PC-9 (cell line): ENCODE measurements at regions of chr7 and their contacts with region 1.

Region 1: DNA sequence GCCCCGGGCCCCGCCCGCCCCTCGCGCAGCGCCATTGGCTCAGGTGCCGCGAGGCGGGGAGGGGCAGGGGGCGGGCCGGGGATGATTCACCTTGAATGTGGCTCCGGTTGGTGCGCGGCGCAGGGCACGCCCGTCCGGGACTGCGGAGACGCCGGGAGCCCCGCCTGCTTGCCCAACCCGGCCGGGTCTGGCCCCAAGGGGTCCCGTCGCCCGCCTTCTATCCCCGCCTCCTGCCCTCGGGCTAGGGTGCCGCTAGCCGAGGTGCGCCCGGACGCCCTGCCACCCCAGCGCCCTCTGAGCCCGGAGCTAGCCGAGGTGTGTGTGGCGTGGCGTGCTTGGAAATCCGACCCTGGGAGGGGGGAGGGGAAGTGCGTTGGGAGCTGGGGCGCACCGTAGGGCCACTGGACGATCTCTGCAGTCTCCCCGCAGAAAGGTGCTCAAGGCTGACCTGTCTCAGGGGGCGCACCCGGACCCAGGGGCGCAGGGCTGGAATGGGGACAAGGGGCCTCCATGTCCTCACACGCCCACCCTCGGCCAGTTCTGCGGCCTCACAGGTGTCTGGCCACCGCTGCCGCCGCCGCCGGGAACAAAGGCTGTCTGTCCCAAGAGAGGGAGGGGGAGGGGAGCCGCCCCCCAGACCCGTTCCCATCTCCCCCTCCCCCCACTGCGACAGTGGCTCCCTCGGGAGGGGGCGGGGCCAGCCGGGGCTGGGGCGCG is 168.9 kb downstream of the NRF1 start:
- DNase-seq: peak; percentile 84 to 98
- H3K4me3 ChIP-seq: peak overlapping the region; percentile 85
- H3K27ac ChIP-seq: peak overlapping the region; percentile 21
- H3K4me1 ChIP-seq: peaks cover 17% of the 10 kb centered on the region
- H3K27me3 ChIP-seq: no peaks in the 10 kb centered on the region
- CTCF ChIP-seq: no peak

Region 2: GRCh38 chr7:129224251-129225205 is 555.9 kb before region 1 on chr7 and contains the start of gene AHCYL2:
- CTCF ChIA-PET with region 1: no interaction called
- POLR2A ChIA-PET with region 1: interaction called, 14 read pairs
- intact Hi-C with region 1: no loop called
- DNase-seq: peak; percentile 95 to 98
- H3K4me3 ChIP-seq: peak within 1 kb of the TSS; percentile 75
- H3K27ac ChIP-seq: peak within 1 kb of the TSS; percentile 74
- H3K4me1 ChIP-seq: peaks cover 19% of the 10 kb centered on the region
- H3K27me3 ChIP-seq: no peaks in the 10 kb centered on the region
- CTCF ChIP-seq: no peak
- total RNA-seq, gene AHCYL2: 15.7 and 16.2 TPM in 2 replicates

Region 3: DNA sequence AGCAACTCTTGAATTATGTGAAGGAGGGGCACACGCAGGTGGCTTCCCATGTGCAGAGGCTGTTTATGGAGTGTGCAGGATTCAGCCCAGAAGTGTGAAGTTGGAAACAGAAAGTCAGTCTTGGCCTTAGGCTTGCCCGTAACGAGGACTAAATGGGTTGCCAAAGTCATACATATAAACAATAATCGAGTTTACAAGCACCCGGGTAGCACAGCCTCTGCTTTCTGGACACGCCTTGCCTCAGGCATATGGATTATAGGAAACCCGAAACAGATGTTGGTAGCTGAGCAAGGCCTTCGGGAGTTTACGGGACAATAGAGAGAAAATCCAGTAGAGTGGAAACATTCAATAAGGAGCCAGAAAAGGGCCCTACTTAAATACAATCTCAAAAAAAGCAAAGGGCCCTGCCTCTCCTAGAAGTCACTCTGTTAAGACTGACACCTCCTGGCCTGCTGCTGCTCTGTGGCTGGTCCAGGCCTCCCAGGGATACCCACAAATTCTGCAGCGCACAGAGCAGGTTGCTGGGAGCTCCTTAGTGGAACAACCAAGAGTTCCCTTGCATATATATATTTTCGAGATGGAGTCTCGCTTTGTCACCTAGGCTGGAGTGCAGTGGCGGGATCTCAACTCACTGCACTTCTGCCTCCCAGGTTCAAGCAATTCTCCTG is 229.6 kb before region 1 on chr7:
- CTCF ChIA-PET with region 1: no interaction called
- POLR2A ChIA-PET with region 1: interaction called, 15 read pairs
- intact Hi-C with region 1: no loop called
- DNase-seq: no peak
- H3K4me3 ChIP-seq: no peak overlapping the region
- H3K27ac ChIP-seq: no peak overlapping the region
- H3K4me1 ChIP-seq: no peaks in the 10 kb centered on the region
- H3K27me3 ChIP-seq: no peaks in the 10 kb centered on the region
- CTCF ChIP-seq: no peak

Region 4: DNA sequence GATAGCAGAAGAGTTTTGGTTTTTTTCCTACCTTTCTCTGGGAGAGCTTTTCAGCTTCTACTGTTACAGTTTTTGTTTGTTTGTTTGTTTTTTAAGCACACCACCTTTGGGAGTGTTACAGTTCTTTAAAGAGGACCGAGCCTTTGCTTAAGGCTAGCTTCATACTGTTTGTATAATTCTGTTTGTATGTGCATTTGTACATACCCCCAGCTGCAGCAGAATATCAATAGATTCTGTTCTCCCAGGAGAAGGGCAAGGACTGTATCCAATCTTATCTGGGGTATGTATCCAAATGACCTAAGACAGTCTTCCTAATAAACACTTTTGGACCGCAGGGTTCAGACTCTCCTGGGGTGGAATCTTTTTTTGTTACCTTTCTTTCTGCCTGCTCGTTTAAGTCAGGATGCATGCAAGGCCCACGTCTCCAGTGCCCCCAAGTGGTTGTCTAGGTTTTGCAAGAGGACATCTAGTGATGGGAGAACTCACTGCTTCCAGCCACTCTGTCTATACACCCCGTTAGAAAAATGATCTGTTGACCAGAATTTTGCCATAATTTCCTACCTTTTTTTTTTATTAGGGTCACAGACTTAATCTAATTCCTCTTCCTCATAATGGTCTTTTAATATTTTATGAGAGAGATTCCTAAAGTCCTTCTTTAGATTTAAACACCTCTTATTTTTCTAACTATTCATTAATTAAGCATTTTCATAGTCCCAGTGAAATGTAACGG is 144.9 kb before region 1 on chr7:
- CTCF ChIA-PET with region 1: no interaction called
- POLR2A ChIA-PET with region 1: no interaction called
- intact Hi-C with region 1: no loop called
- DNase-seq: peak; percentile 46 to 62
- H3K4me3 ChIP-seq: no peak overlapping the region
- H3K27ac ChIP-seq: 0 out of 2 replicates have a peak overlapping the region, but pooled peaks have one; percentile 4
- H3K4me1 ChIP-seq: no peaks in the 10 kb centered on the region
- H3K27me3 ChIP-seq: no peaks in the 10 kb centered on the region
- CTCF ChIP-seq: peak; percentile 81

Region 5: GRCh38 chr7:129698516-129699418 is 81.6 kb before region 1 on chr7:
- CTCF ChIA-PET with region 1: no interaction called
- POLR2A ChIA-PET with region 1: no interaction called
- intact Hi-C with region 1: no loop called
- DNase-seq: no peak
- H3K4me3 ChIP-seq: no peak overlapping the region
- H3K27ac ChIP-seq: peak overlapping the region; percentile 80
- H3K4me1 ChIP-seq: peaks cover 11% of the 10 kb centered on the region
- H3K27me3 ChIP-seq: no peaks in the 10 kb centered on the region
- CTCF ChIP-seq: no peak

Region 6: GRCh38 chr7:129764247-129765084 is 15.9 kb before region 1 on chr7:
- CTCF ChIA-PET with region 1: no interaction called
- POLR2A ChIA-PET with region 1: interaction called, 18 read pairs
- intact Hi-C with region 1: no loop called
- DNase-seq: peak in 1 of 2 experiments; percentile 23
- H3K4me3 ChIP-seq: no peak overlapping the region
- H3K27ac ChIP-seq: no peak overlapping the region
- H3K4me1 ChIP-seq: no peaks in the 10 kb centered on the region
- H3K27me3 ChIP-seq: no peaks in the 10 kb centered on the region
- CTCF ChIP-seq: no peak